Cardiac septum (tissue), 1 donor: ENCODE measurements at regions of chr5 and their contacts with region 1.

Region 1: GRCh38 chr5:66440202-66440680 is 156.0 kb upstream of the MAST4 start:
- DNase-seq: no peak

Region 2: DNA sequence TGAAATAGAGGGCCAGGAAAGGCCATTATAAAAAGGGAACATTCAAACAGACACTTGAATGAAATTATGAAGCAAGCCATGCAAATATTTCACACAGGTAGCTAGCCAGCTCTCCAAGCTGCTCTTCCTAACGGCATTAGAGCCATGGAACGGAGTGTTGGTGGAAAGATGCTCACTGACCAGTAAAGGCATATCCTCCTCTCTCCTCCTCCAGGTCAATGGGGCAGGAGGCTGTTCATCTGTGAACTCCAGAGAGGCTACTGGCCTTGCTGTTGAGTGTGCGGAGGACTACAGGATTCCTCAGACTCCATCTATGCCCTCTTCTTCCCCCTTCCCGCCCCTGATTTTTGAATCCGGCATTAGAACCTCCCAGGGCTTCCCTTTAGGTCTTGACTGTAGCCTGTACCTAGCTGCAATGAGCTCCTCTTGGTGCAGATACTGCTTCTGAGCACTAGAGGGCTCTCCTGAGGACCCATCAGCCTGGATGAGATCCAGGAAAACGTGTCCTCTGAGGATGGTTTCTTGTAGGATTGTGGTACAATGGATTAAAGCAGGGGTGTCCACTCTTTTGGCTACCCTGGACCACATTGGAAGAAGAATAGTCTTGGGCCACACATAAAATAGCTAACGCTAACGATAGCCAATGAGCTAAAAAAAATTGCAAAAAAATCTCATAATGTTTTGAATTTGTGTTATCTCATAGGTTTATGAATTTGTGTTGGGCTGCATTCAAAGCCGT is 134.0 kb before region 1 on chr5:
- intact Hi-C with region 1: loop called (anchors 5 kb)
- DNase-seq: no peak

Region 3: DNA sequence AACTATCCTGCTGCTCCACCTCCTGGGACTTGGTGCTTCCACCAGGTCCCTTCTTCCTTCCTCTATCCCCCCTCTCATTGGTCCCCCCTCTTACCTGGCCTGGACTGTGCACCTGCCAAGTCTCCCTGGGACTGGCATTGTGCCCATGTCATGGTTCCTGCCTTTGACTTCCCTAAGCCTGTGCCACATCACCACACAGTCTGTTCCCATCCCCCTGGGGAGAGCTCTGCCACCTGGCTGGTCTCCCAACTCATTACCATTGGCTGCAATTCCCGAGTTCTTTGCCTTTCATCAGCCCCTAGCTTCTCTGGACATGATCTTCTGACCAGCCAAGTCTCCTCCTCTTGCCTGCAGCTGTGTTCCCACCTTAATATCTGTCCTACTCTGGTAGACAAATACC is 115.9 kb before region 1 on chr5:
- intact Hi-C with region 1: loop called (anchors 2 kb)
- DNase-seq: peak; percentile 79

Region 4: GRCh38 chr5:66367814-66368541 is 72.3 kb before region 1 on chr5:
- intact Hi-C with region 1: loop called (anchors 2 kb)
- DNase-seq: no peak

Region 5: DNA sequence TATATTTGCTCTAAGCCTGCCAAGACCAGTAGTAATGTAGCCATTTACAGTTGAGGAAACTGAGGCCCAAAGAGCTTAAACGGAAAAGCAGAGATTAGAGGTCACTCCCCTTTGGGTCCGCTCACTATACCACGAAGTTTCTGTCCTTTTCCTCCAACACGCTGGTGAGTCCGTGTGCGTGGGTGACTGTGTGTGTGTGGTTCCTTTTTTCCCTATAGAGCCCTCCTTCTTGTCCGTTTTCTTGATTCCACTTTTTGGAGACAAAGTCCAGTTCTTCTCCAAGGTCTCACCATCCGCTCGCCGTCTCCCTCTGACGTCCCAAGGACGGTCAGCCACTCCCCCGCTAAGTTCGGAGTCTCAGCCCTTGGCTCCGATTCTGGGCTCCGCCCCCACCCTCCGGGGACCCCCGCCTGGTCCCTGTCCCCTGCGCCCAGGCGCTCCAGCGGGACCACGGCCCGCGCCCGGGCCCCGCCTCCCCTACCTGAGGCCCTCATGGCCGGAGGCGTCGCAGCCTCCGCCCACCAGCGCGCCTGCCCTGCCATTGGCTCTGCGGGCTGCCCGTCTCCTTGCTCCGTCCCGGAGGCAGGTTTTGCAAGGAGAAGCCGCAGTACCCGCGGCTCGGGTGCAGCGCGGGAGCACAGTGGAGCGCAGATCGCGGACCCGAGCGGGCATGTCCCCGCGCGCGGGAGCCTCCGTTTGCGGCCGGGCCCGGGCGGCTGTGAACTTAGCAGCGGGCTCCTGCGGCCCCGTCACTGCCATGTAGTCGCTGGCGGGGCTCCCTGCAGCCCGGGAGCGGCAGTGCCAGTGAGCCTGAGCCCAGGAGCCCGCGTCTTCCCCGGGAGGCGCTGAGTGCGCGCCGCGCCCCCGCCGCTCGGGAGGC is 155.8 kb after region 1 on chr5 and contains the start of gene MAST4:
- intact Hi-C with region 1: loop called (anchors 5 kb)
- DNase-seq: peak; percentile 94
- total RNA-seq, gene MAST4: 91.4 TPM